Activated B cell treated with CpG ODN at 0.5 μM for 24 hours (primary cell): ENCODE measurements at regions of chr18 and their contacts with region 1.

Region 1: GRCh38 chr18:34661464-34662111 is 48.5 kb upstream of the DTNA start:
- DNase-seq: no peak
- ATAC-seq: no peak
- H3K4me3 Mint-ChIP-seq: no peak overlapping the region
- H3K27ac Mint-ChIP-seq: no peak overlapping the region
- H3K4me1 Mint-ChIP-seq: no peaks in the 10 kb centered on the region
- H3K27me3 Mint-ChIP-seq: peaks cover 4% of the 10 kb centered on the region
- CTCF ChIP-seq: peak; percentile 53

Region 2: DNA sequence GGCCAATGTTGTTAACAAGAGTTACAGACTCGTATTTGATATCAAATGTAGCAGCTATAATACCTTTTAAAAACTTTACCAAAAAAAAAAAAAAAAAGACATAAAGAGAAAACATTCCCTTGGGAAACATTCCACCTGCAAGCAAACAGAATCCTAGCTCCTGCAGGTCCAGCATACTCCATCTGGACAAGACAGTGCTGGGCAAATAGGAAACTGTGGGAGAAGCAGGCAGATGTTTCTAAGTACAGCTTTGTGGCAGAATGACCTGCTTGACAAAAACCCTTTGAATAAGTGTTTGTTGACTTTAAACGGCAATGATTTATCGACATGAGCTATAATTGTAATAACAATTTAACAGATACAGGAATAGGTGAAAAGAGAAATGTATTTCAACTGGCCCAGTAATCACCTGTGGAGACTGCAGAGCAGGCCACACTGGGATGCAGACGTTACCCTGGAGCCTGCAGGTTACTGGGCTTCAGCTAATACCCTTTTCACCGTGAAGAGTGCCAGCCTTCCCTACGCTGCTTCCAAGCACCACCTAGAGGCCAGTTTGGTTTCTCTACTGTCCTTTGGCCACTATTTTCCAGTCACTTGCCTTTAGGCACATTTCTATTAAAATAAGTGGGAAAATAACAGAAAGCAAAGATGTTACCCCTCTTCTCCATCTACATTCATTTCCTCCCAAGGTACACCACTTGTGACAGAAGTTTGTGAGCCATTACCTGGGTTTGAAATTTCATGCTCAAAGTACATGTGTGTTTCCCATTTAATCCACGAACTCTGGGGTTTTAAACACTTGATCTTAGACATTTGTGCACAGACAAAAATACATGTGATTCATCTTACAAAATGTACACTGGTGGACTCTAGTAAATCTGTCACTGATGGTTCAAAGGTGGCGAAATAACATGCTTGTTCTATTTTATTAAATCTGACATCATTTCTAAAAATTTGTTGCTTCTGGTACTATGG is 482.3 kb after region 1 on chr18:
- CTCF ChIA-PET with region 1: no interaction called
- POLR2A ChIA-PET with region 1: no interaction called
- intact Hi-C with region 1: loop called (anchors 5 kb)
- DNase-seq: no peak
- ATAC-seq: peak; percentile 74
- H3K4me3 Mint-ChIP-seq: no peak overlapping the region
- H3K27ac Mint-ChIP-seq: no peak overlapping the region
- H3K4me1 Mint-ChIP-seq: peaks cover 49% of the 10 kb centered on the region
- H3K27me3 Mint-ChIP-seq: no peaks in the 10 kb centered on the region
- CTCF ChIP-seq: no peak